Gastrocnemius medialis (tissue), 4 donors: ENCODE measurements at regions of chr19 and their contacts with region 1.

Region 1: GRCh38 chr19:7177926-7178325 is 108.4 kb downstream of the ZNF557 start:
- DNase-seq: no peak
- ATAC-seq: no peak
- H3K4me3 ChIP-seq: no peak overlapping the region
- H3K27ac ChIP-seq: peak overlapping the region; percentile 83 to 89 (median 84)
- H3K4me1 ChIP-seq: peaks cover 49 to 64% of the 10 kb centered on the region in 2 donors
- H3K27me3 ChIP-seq: no peaks in the 10 kb centered on the region
- CTCF ChIP-seq: no peak
- POLR2A ChIP-seq: no peak

Region 2: DNA sequence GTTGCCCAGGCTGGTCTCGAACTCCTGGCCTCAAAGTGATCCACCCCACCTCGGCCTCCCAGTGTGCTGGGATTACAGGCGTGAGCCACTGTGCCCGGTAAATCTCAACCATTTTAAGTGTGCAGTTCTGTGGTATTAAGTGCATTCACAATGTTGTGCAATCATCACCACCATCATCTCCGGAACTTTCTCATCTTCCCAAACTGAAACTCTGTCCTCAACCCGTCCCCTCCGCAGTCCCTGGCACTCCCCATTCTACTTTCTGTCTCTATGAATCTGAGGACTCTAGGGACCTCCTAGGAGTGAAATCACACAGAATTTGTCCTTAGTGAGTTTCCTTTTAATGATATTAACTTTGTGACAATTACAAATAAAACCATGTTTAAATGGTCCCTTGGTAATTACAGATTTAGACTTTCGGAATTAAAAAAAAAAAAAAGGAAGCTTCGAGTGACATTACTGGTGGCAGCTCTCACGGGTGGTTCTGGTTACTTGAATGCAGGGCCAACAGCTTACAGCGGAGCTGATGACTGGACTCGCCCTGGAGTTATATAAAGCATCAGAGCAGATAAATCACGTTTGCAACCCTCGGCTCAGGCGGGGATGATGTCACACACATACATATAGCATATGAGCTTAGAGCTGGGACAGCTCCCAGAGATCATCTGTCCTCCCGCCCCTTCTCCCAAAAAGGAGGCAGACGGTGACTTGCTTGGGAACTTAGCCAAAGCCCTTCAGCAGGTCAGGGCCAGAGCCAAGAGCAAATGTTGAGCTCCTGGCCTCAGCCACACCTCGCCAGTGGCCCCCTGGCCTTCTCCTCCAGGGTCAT is 18.6 kb before region 1 on chr19:
- in situ Hi-C with region 1: no loop called
- intact Hi-C with region 1: loop called (anchors 2 kb)
- DNase-seq: peak; percentile 95 to 98
- ATAC-seq: peak; percentile 98
- H3K4me3 ChIP-seq: peak overlapping the region; percentile 2 to 43 (median 38)
- H3K27ac ChIP-seq: peak overlapping the region; percentile 93 to 95 (median 94)
- H3K4me1 ChIP-seq: peaks cover 14 to 15% of the 10 kb centered on the region in 2 donors
- H3K27me3 ChIP-seq: no peaks in the 10 kb centered on the region
- CTCF ChIP-seq: no peak
- POLR2A ChIP-seq: peak; percentile 52 to 67